Activated naive CD4-positive, alpha-beta T cell treated with anti-CD3 and anti-CD28 coated beads for 36 hours (primary cell): ENCODE measurements at regions of chr18 and their contacts with region 1.

Region 1: GRCh38 chr18:3380384-3380961 is 69.5 kb upstream of the TGIF1 start:
- DNase-seq: peak; percentile 37
- H3K4me3 Mint-ChIP-seq: no peak overlapping the region
- H3K27ac Mint-ChIP-seq: no peak overlapping the region
- H3K4me1 Mint-ChIP-seq: peaks cover 7% of the 10 kb centered on the region
- H3K27me3 Mint-ChIP-seq: no peaks in the 10 kb centered on the region

Region 2: GRCh38 chr18:3062798-3063680 is 317.4 kb before region 1 on chr18:
- CTCF ChIA-PET with region 1: no interaction called
- intact Hi-C with region 1: no loop called
- DNase-seq: peak; percentile 89
- H3K4me3 Mint-ChIP-seq: peak overlapping the region; percentile 4
- H3K27ac Mint-ChIP-seq: no peak overlapping the region
- H3K4me1 Mint-ChIP-seq: peaks cover 64% of the 10 kb centered on the region
- H3K27me3 Mint-ChIP-seq: no peaks in the 10 kb centered on the region

Region 3: GRCh38 chr18:3305354-3305762 is 75.1 kb before region 1 on chr18:
- CTCF ChIA-PET with region 1: no interaction called
- intact Hi-C with region 1: loop called (anchors 1 kb)
- DNase-seq: peak; percentile 66
- H3K4me3 Mint-ChIP-seq: no peak overlapping the region
- H3K27ac Mint-ChIP-seq: peak overlapping the region; percentile 37
- H3K4me1 Mint-ChIP-seq: peaks cover 14% of the 10 kb centered on the region
- H3K27me3 Mint-ChIP-seq: peaks cover 16% of the 10 kb centered on the region

Region 4: DNA sequence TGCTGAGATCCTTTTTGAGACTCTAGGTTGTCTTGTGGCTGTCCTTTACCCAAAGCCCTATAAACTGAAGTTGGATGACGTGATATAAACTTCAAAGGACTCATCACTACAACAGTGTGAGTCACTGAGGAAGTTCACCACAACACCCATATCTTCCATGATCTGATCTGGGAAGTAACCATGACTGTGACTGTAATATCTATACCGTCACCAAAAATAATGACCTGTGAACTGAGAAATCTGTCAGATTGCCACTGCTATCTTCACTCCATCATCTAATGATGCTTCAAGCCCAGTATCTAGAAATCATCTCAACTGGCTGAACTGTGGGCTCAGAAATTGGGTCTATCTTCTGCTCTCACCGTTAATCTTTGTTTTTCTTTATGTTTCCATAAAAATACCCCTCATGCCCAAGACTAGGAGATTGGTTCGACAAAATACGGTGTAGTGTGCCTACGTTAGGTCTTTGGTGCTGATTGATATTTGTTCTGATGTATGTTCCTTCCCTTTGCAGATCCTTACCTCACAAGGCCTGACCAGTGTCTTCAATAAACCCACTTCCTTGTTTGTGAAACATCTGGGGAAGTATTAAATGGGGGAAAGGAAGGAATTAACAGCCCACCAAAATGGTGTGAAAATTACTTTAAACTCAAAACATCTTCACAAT is 40.3 kb before region 1 on chr18:
- CTCF ChIA-PET with region 1: interaction called, 3 read pairs
- intact Hi-C with region 1: loop called (anchors 1 kb)
- DNase-seq: peak; percentile 26
- H3K4me3 Mint-ChIP-seq: no peak overlapping the region
- H3K27ac Mint-ChIP-seq: peak overlapping the region; percentile 62
- H3K4me1 Mint-ChIP-seq: peaks cover 25% of the 10 kb centered on the region
- H3K27me3 Mint-ChIP-seq: no peaks in the 10 kb centered on the region

Region 5: DNA sequence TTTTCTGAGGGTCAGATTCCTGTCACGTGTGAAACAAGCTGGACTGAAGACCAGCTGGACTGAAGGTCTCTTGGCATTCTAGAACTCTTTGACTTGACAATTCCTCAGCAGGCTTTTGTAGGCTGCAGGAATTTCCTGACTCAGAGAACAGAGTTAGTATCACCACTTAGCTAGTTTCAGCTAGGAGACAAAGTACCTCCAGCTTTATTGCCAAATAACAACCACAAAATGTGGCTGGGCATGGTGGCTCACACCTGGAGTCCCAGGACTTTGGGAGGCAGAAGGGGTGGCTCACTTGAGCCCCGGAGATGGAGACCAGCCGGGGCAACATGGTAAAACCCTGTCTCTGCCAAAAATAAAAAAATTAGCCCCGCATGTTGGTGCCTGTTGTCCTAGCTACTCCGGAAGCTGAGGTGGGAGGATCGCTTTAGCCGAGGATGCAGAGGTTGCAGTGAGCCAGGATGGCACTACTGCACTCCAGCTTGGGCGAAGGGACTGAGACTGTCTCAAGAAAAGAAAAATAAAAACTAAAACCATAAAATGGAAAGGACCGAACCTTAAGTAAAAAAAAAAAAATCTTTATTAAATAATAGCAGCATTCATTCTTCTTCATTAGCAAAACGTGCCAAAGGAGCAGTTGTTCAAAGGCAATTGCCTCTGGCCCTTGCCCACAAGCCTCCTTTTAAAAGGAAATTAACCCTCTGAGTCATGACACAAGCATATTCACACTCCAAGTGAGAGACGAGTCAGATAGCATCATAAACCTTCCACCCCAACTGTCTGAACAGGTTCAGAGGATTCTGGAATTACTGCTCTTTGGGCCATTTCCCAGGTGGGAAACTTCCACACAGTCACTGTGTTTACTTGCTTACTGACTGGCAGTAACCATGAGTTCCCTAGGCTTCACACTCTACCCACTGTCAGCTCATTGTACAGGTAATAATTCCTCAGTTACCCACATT is 29.6 kb before region 1 on chr18:
- CTCF ChIA-PET with region 1: no interaction called
- intact Hi-C with region 1: loop called (anchors 2 kb)
- DNase-seq: peak; percentile 39
- H3K4me3 Mint-ChIP-seq: no peak overlapping the region
- H3K27ac Mint-ChIP-seq: no peak overlapping the region
- H3K4me1 Mint-ChIP-seq: peaks cover 3% of the 10 kb centered on the region
- H3K27me3 Mint-ChIP-seq: peaks cover 3% of the 10 kb centered on the region

Region 6: DNA sequence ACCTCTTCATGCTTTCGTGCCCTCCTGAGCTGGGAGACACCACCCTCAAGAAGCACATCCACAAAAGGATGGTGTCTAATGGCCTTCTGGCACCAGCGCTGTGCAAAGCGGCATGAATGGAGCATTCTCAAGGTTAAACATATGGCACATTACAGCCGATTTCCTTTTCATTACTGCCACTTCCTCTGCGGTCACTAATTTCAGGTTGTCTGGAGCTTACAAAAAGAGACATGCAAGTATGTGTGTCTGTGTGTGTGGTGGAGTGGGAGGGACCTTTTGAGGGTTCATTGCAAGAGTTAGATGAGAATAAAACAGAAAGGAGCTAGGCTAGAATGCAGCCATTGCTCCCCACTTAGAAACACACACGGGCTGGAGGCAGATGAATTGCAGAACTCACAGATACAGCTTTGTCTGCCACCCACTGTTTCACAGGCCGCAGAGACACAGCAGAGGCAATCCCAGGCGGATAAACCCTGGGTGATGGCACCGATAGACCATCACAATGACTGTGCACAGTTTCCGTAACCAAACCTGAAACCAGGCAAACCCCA is 145.5 kb after region 1 on chr18:
- CTCF ChIA-PET with region 1: no interaction called
- intact Hi-C with region 1: loop called (anchors 5 kb)
- DNase-seq: peak; percentile 58
- H3K4me3 Mint-ChIP-seq: no peak overlapping the region
- H3K27ac Mint-ChIP-seq: no peak overlapping the region
- H3K4me1 Mint-ChIP-seq: peaks cover 17% of the 10 kb centered on the region
- H3K27me3 Mint-ChIP-seq: no peaks in the 10 kb centered on the region

Region 7: GRCh38 chr18:3585656-3586509 is 205.4 kb after region 1 on chr18:
- CTCF ChIA-PET with region 1: interaction called, 6 read pairs
- intact Hi-C with region 1: loop called (anchors 1 kb)
- DNase-seq: peak; percentile 88
- H3K4me3 Mint-ChIP-seq: no peak overlapping the region
- H3K27ac Mint-ChIP-seq: peak overlapping the region; percentile 1
- H3K4me1 Mint-ChIP-seq: peaks cover 36% of the 10 kb centered on the region
- H3K27me3 Mint-ChIP-seq: no peaks in the 10 kb centered on the region